ENCODE measurements at regions of chr6 and their contacts with region 1.

Region 1: DNA sequence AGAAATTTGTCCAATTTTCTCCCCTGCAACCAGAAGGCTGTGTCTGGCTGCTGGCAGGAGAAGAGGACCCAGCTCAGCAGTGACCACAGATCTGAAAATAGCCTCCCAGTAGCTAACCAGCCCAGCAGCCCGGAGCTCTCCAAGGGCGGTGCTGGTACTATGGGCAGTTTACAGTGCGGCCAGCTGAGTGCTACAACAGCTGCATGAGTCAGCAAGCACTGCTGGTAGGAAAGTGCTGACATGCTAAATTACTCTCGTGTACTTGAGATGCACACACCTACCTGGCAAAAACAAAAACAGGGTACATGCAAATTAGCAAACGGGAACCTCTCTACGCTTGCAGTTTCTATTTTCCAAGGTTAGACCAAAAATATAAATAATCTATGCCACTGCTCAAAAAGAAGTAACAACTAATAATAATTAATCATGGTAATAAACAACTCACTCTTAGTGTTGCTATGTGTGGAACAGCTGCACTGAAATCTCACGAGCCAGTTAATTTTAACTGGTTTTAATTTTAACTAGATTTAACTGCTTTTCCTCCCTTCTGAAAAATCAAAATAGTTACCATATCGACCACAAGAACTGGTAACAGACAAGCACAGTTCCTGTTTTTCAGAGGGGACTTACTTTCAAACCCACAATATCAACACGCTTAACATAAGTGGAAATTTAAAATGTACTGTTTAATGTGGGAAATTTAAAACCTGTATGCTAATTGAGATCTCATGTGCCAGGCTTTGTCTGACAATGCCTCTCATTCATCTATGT is 10.8 kb downstream of the BACH2 start:
- DNase-seq: peak; percentile 47
- H3K4me3 Mint-ChIP-seq: peak overlapping the region; percentile 79
- H3K27ac Mint-ChIP-seq: peak overlapping the region; percentile 97
- H3K4me1 Mint-ChIP-seq: peaks cover 89% of the 10 kb centered on the region
- H3K27me3 Mint-ChIP-seq: peaks cover 3% of the 10 kb centered on the region

Region 2: DNA sequence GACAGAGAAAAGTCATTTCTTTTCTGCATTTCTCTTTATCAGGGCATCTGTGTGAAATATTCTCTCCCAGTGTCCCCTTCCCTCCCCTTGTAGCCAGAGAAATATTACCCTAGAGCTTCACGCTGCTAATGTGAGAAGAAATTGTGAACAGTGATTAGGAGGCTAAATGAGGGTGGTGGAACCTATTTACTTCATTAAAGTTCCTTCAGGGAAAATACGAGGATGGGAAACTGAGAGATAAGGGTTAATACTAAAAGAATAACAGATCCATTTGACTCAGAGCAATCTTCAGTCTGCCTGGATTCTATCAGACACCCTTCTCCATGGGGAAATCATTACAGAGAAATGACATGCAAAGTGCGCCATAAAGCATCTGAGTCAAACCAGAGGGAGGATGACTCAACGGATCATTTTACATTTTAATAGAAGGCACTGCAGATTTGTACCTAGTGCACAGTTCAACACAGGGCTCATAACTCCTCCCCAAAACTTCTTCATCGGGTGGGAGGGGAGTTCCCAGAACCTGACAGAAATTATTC is 260.2 kb before region 1 on chr6:
- intact Hi-C with region 1: loop called (anchors 2 kb)
- DNase-seq: no peak
- H3K4me3 Mint-ChIP-seq: peak overlapping the region; percentile 69
- H3K27ac Mint-ChIP-seq: peak overlapping the region; percentile 95
- H3K4me1 Mint-ChIP-seq: peaks cover 77% of the 10 kb centered on the region
- H3K27me3 Mint-ChIP-seq: no peaks in the 10 kb centered on the region

Region 3: GRCh38 chr6:90202156-90202555 is 83.6 kb before region 1 on chr6:
- intact Hi-C with region 1: loop called (anchors 1 kb)
- DNase-seq: no peak
- H3K4me3 Mint-ChIP-seq: peak overlapping the region; percentile 71
- H3K27ac Mint-ChIP-seq: peak overlapping the region; percentile 85
- H3K4me1 Mint-ChIP-seq: peaks cover 43% of the 10 kb centered on the region
- H3K27me3 Mint-ChIP-seq: no peaks in the 10 kb centered on the region

Region 4: DNA sequence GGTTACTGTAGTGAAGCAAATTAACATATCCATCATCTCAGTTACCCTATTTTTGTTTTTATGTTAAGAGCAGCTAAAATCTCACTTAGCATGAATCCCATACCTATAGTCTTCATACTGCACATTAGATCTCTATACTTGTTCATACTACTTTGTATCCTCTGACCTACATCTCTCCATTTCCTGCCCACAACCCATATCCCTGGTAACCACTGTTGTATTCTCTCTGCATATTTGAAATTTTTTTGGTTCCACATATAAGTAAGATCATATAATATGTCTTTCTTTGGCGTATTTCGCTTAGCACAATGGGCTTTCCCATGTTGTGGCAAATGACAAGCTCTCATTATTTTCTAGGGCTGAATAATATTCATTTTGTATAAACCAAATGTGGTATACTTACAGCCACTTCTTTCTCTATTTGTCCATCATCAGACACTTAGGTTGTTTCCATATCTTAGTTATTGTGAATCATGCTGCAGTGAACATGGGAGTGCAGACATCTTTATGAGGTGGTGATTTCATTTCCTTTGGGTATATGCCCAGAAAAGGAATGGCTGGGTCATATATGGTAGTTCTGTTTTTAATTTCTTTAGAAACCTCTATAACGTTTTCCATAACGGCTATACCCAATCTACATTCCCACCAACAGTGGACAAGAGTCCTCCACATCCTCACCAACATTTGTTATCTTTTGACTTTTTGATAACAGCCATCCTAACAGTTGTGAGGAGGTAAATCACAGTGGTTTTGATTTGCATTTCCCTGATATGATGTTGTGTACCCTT is 28.9 kb before region 1 on chr6:
- intact Hi-C with region 1: loop called (anchors 1 kb)
- DNase-seq: peak; percentile 27
- H3K4me3 Mint-ChIP-seq: peak overlapping the region; percentile 0
- H3K27ac Mint-ChIP-seq: peak overlapping the region; percentile 87
- H3K4me1 Mint-ChIP-seq: peaks cover 78% of the 10 kb centered on the region
- H3K27me3 Mint-ChIP-seq: no peaks in the 10 kb centered on the region

Region 5: DNA sequence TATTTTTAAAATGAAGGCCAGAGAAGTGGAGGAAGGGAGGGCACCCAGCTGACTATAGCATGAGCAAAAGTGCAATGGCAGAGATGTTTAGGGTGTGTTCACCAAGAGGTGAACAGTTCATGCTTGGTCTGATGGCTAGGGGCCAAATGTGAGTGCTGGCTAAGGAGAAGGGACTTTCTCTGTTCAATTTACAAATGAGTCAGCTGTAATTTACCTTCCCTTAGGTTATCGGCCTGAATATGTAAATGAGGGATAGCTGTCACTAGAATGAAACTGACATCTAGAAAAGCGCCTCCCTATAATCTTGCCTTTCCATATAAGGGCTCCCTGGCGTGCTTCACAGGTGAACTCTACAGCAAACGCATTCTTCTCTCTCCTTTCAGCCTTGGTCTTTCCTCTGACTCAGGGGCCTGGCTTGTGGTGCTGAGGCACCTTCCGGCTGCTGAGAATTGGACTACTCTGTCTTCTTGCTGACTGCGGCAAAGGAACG is 125.5 kb after region 1 on chr6:
- intact Hi-C with region 1: loop called (anchors 1 kb)
- DNase-seq: peak; percentile 59
- H3K4me3 Mint-ChIP-seq: no peak overlapping the region
- H3K27ac Mint-ChIP-seq: peak overlapping the region; percentile 75
- H3K4me1 Mint-ChIP-seq: peaks cover 81% of the 10 kb centered on the region
- H3K27me3 Mint-ChIP-seq: no peaks in the 10 kb centered on the region

Region 6: DNA sequence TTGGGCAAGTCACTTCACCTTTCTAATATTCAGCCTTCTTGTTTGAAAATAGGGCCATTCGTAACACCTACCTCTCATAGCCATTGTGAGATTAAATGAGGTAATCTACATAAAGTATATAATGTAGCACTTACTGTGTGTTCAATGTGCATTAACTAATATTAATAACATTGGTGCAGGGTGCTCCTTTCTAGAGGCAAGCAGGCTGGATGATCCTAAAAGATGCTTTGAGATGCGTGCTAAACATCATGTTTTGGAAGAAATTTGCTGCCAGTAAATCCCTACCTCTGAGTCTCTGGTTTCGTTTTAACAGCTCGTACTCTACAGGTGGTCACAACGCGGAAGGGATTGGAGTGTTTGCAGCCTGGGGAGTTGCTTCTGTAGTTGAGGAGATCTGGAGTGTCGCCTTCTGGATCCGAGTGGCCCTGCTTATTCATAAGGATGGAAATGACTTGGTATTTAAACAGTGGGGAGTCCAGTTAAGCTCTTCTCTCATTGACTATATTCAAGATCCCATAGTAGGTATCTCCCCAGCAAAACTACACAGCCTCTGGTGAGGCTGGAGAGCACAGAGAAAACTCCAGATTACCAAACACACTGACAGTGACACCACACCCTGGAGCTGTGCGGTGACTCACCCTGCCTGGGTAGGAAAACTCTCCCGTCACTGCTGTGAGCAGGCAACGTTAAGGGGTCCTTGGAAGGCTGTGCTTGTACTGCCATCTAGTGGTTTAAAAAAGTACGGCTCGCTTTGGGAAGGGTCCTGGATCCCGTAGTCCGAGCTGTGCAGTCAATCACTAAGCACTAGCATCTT is 193.2 kb after region 1 on chr6:
- intact Hi-C with region 1: loop called (anchors 1 kb)
- DNase-seq: peak; percentile 76
- H3K4me3 Mint-ChIP-seq: peak overlapping the region; percentile 3
- H3K27ac Mint-ChIP-seq: peak overlapping the region; percentile 85
- H3K4me1 Mint-ChIP-seq: peaks cover 56% of the 10 kb centered on the region
- H3K27me3 Mint-ChIP-seq: peaks cover 2% of the 10 kb centered on the region